Heart left ventricle (tissue), 16 donors: ENCODE measurements at regions of chr2 and their contacts with region 1.

Region 1: GRCh38 chr2:236569573-236569973 is at the start of gene ACKR3:
- DNase-seq: peak; percentile 84 to 87 (median 84)
- ATAC-seq: peak; percentile 74 to 86 (median 84)
- H3K4me3 ChIP-seq: peak within 1 kb of the TSS; percentile 17 to 80 (median 59)
- H3K27ac ChIP-seq: peak within 1 kb of the TSS; percentile 85 to 98 (median 96)
- H3K4me1 ChIP-seq: peaks cover 6 to 68% (median 48%) of the 10 kb centered on the region in 12 donors
- H3K27me3 ChIP-seq: no peaks in the 10 kb centered on the region
- CTCF ChIP-seq: peak in 11 of 12 donors; percentile 13 to 64 (median 43)
- POLR2A ChIP-seq: peak; percentile 68 to 88
- total RNA-seq, gene ACKR3: 15.7 to 56.3 (median 49.4) TPM

Region 2: GRCh38 chr2:236343400-236344161 is 226.0 kb before region 1 on chr2:
- intact Hi-C with region 1: loop called in 2 of 10 experiments (anchors 5 to 10 kb)
- DNase-seq: peak in 3 of 5 donors; percentile 45 to 57 (median 53)
- ATAC-seq: no peak
- H3K4me3 ChIP-seq: no peak overlapping the region
- H3K27ac ChIP-seq: no peak overlapping the region
- H3K4me1 ChIP-seq: peaks cover 0 to 45% (median 9%) of the 10 kb centered on the region in 12 donors
- H3K27me3 ChIP-seq: no peaks in the 10 kb centered on the region
- CTCF ChIP-seq: peak; percentile 67 to 86 (median 81)
- POLR2A ChIP-seq: no peak

Region 3: DNA sequence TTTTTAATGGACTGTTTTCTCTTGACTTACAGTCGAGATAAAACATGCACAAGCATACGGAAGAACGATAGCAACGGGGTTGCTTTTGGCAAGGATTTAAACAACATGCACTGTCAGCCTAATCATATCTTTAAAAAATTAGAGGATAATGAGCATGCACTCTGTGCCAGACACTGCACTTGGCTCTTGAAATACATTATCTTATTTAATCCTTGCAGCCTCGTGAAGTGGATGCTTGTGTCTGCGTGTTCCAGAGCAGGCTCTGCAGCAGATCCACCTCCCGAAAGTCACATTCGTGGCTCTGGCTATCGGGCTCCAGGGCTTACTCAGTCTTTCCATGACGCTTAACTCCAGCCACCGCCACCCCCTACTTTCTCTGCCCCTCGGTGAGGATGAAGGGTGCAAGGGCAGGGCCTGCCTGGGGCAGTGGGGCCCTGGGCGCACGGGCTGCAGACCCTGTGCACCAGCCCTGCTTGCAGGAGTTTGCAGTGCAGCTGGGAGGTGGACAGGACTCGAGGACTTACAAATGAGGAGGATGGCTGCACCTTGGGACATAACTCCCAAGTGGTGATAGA is 61.8 kb after region 1 on chr2:
- intact Hi-C with region 1: loop called in 1 of 10 experiments (anchors 2 kb)
- DNase-seq: peak in 4 of 5 donors; percentile 39 to 82 (median 59)
- ATAC-seq: peak; percentile 21 to 90 (median 86)
- H3K4me3 ChIP-seq: no peak overlapping the region
- H3K27ac ChIP-seq: peak overlapping the region in 10 of 12 donors; percentile 3 to 72 (median 40)
- H3K4me1 ChIP-seq: peaks cover 0 to 28% (median 17%) of the 10 kb centered on the region in 12 donors
- H3K27me3 ChIP-seq: no peaks in the 10 kb centered on the region
- CTCF ChIP-seq: no peak
- POLR2A ChIP-seq: no peak

Region 4: DNA sequence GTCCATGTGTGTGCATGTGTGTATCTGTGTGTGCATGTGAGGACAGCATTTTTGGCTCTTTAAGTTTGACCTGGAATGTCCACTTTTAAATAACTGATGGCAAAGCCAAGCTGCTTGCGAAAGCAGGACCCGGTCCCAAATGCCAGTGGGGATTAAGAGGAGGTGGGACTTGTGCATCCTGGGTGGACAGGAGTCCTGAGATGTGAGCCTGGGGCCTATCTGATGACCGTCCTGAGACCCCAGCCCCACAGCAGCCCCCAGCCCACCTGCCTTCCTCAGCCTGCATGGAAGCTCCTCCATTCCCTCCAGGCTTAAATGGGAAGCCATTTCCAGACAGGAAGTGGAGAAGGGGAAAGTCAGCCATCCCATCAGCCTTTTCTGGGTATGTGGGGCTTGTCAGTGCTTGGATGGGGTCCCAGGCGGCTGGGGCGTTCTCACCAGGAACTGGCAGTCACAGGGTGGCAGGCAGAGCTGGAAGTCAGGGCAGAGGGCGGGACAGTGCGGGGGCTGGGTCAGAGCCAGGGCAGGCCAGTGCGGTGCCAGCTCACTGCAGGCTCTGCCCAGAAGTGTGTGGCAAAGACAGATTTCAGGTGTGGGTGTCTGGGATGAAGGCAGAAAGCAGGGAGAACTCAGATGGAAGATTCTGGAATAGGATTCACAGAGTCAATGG is 117.9 kb after region 1 on chr2:
- intact Hi-C with region 1: loop called in 2 of 10 experiments (anchors 5 kb)
- DNase-seq: peak in 4 of 5 donors; percentile 38 to 65 (median 50)
- ATAC-seq: peak; percentile 17 to 66 (median 54)
- H3K4me3 ChIP-seq: no peak overlapping the region
- H3K27ac ChIP-seq: peak overlapping the region in 8 of 12 donors; percentile 53 to 80 (median 72)
- H3K4me1 ChIP-seq: peaks cover 0 to 59% (median 30%) of the 10 kb centered on the region in 12 donors
- H3K27me3 ChIP-seq: no peaks in the 10 kb centered on the region
- CTCF ChIP-seq: no peak
- POLR2A ChIP-seq: no peak

Region 5: DNA sequence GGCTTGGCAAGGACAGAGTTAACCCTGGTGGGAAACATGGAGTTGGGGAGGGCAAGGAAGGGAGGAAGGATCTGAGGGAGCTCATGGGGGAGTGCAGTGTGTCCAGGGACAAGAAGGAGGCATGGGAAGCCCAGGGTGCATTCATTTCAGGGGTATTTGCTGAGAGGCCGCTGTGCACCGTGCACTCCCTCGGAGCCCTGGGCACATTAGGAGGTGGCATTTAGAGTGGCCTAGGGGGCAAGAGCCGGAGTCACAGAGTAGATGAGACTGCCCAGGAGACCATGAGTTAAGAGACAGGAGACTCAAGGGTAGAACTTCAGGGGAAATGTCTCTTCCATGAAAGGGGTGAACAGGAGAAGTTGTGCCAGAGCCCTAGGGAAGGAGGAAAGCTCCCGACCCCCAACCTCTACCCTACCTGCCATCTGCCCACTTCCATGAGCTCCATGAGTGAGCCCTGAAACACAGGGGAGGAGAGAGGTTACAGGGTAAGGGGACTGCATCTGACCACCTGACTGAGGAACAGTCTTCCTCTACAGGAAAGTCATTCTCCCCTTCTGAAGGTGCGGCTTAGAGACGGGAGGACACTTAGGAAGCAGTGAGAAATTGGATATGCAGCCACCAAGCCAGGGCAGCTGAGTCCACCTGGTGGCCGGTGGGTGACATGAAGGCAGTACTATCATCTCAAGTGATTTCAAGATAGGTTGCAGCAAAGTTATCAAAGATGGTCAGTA is 457.6 kb after region 1 on chr2:
- intact Hi-C with region 1: loop called (anchors 1 to 10 kb)
- DNase-seq: peak; percentile 62 to 82 (median 65)
- ATAC-seq: peak; percentile 87 to 92 (median 92)
- H3K4me3 ChIP-seq: no peak overlapping the region
- H3K27ac ChIP-seq: no peak overlapping the region
- H3K4me1 ChIP-seq: peaks cover 0 to 9% (median 0%) of the 10 kb centered on the region in 12 donors
- H3K27me3 ChIP-seq: no peaks in the 10 kb centered on the region
- CTCF ChIP-seq: peak; percentile 62 to 94 (median 86)
- POLR2A ChIP-seq: no peak